Panc1 (cell line): ENCODE measurements at regions of chr2 and their contacts with region 1.

Region 1: DNA sequence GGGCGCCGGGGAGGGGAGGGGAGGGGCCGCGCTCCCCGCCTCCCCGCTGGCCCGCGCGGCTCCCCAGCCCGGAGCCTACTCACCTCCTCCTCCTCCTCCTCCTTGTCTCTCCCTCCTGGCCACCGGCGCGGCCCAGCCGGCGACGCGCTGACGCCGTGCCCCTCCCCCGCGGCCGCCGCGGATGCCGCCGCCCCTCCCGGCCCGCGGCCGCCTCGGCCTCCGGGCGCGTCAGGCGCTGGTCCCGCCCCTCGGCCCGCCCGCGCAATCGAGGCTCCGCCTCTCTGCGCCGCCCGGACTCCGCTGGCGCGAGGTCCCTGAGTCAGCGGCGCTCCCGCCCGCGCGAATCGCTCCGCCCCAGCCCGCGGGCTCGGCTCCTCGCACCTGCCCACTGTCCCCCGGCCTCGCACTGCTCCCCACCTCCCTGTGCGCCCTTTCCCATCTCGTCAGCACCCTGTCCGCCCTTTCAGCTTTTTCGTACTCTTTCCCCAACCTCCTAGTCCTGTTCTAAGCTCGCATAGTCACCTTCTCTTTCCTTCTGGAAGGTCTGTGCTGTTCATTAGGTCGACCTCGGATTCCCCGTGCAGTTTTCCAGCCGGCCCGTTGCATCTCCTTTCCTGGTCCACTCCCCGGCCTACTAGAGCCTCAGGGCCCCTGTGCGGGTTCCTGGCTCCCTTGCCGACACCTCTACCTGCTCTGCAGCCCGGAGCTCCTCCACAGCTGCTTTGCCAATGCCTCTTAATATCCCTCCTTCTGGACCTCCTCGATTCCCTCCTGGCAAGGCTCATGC is 187.4 kb downstream of the ZEB2 start:
- DNase-seq: no peak
- ATAC-seq: peak; percentile 98
- H3K4me3 ChIP-seq: peak overlapping the region; percentile 76 to 84
- H3K27ac ChIP-seq: peak overlapping the region; percentile 51
- H3K4me1 ChIP-seq: peaks cover 12% of the 10 kb centered on the region
- H3K27me3 ChIP-seq: no peaks in the 10 kb centered on the region
- CTCF ChIP-seq: no peak

Region 2: DNA sequence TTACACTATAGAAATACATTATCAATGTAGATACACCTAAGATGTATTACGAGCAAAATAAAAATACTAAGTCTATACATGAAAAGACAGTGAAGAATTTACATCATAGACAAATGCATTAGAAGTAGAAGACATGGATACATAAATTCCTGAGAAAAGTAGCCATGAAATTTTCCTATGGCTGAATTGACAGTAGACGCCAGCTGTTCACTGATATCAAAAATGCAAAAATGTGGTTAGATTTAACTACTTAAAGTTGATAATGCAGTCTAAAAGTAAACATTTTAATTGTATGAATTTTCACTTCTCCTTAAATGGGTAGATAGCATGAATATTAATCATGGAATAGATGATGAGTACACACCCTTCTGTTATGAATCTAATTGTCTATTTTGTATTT is 852.5 kb before region 1 on chr2:
- CTCF ChIA-PET with region 1: interaction called, 11 read pairs
- POLR2A ChIA-PET with region 1: no interaction called
- in situ Hi-C with region 1: no loop called
- intact Hi-C with region 1: no loop called
- DNase-seq: no peak
- ATAC-seq: no peak
- H3K4me3 ChIP-seq: no peak overlapping the region
- H3K27ac ChIP-seq: no peak overlapping the region
- H3K4me1 ChIP-seq: no peaks in the 10 kb centered on the region
- H3K27me3 ChIP-seq: no peaks in the 10 kb centered on the region
- CTCF ChIP-seq: no peak